ENCODE measurements at regions of chr13 and their contacts with region 1.

Region 1: DNA sequence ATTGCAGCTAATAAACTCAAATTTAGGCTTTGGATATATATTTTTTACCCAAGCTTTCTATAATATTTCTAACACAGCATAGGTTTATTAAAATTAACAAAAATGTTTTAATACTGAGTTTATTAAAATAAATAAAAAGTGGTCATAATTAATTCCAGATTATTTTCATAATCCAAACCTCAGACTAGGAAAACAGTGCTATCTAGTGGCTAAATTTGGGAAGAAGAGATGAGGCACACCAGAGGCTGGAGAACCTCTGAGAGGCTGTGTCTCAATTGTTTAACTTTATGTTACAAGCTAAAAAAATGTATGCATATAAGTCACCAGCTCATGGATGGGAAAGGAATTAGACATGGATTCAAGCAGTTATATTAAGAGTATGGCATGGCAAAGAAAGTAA is 392.5 kb downstream of the DIAPH3 start:
- DNase-seq: no peak
- H3K4me3 ChIP-seq: no peak overlapping the region
- H3K27ac ChIP-seq: no peak overlapping the region
- H3K4me1 ChIP-seq: no peaks in the 10 kb centered on the region
- H3K27me3 ChIP-seq: no peaks in the 10 kb centered on the region
- CTCF ChIP-seq: peak; percentile 30 to 61 (median 36)
- POLR2A ChIP-seq: no peak

Region 2: DNA sequence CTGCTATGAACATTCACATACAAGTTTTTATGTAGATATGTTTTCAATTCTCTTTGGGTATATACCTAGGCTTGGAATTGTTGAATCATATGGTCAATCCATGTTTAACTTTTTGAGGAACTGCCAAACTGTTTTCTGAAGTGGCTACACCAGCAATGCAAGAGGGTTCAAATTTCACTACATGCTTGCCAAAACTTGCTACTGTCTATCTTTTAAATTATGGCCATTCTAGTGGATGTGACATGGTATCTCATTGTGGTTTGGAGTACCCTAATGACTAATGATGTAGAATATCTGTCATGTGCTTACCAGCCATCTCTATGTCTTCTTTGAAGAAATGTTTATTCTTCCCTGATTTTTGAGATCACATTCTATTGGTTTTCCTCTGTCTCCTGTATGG is 467.8 kb before region 1 on chr13:
- intact Hi-C with region 1: no loop called
- DNase-seq: no peak
- H3K4me3 ChIP-seq: no peak overlapping the region
- H3K27ac ChIP-seq: no peak overlapping the region
- H3K4me1 ChIP-seq: no peaks in the 10 kb centered on the region
- H3K27me3 ChIP-seq: no peaks in the 10 kb centered on the region
- CTCF ChIP-seq: no peak
- POLR2A ChIP-seq: no peak

Region 3: GRCh38 chr13:59391696-59392095 is 379.6 kb before region 1 on chr13:
- intact Hi-C with region 1: loop called in 1 of 2 experiments (anchors 10 kb)
- DNase-seq: peak; percentile 48 to 74 (median 65)
- H3K4me3 ChIP-seq: no peak overlapping the region
- H3K27ac ChIP-seq: no peak overlapping the region
- H3K4me1 ChIP-seq: peaks cover 0 to 4% of the 10 kb centered on the region in 2 donors
- H3K27me3 ChIP-seq: peaks cover 4% of the 10 kb centered on the region
- CTCF ChIP-seq: peak; percentile 69 to 88 (median 81)
- POLR2A ChIP-seq: no peak

Region 4: DNA sequence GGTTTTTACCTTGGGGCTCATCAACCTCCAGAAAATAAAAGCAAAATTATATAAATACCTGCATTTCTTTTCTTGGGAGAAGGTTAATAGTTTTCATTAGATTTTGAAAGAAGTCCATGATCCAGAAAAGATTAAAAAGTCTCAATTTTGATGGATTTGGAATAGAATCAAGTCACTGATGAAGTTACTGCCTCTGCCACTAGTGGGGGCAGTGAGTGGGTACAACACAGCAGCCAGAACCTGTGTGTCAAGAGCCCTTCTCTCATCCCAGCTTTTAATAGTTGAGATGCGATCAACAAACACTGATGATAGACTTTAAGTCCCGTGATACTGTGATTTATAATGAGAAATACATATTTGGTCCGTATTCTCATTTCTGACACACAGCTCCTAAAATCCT is 294.3 kb before region 1 on chr13:
- intact Hi-C with region 1: no loop called
- DNase-seq: no peak
- H3K4me3 ChIP-seq: no peak overlapping the region
- H3K27ac ChIP-seq: no peak overlapping the region
- H3K4me1 ChIP-seq: no peaks in the 10 kb centered on the region
- H3K27me3 ChIP-seq: no peaks in the 10 kb centered on the region
- CTCF ChIP-seq: no peak
- POLR2A ChIP-seq: no peak

Region 5: GRCh38 chr13:60922576-60923231 is 1151.4 kb after region 1 on chr13:
- intact Hi-C with region 1: no loop called
- DNase-seq: no peak
- H3K4me3 ChIP-seq: no peak overlapping the region
- H3K27ac ChIP-seq: no peak overlapping the region
- H3K4me1 ChIP-seq: no peaks in the 10 kb centered on the region
- H3K27me3 ChIP-seq: no peaks in the 10 kb centered on the region
- CTCF ChIP-seq: no peak
- POLR2A ChIP-seq: no peak

Measured in adrenal gland (tissue), 19 donors.